Activated B cell treated with CpG ODN at 0.5 μM for 24 hours (primary cell): ENCODE measurements at regions of chr1 and their contacts with region 1.

Region 1: DNA sequence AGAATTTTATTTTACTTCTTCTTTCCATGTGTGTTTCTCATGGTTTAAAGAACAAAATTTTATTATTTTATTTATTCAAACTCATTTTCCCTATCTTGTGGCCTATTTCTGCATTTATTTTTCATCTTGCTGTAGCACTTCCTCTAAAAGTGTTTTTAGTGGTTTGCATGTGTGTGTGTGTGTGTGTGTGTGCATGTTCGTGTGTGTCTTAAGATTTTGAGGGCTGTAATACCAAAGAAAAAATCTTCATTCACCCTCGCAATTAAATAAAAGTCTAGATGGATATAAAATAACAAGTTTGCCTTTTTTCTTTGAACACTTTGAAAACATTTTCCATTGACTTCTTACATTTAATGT is 24.6 kb upstream of the FCRL3 start:
- DNase-seq: no peak
- ATAC-seq: peak; percentile 17
- H3K4me3 Mint-ChIP-seq: peak overlapping the region; percentile 16
- H3K27ac Mint-ChIP-seq: peak overlapping the region; percentile 97
- H3K4me1 Mint-ChIP-seq: peaks cover 71% of the 10 kb centered on the region
- H3K27me3 Mint-ChIP-seq: no peaks in the 10 kb centered on the region
- CTCF ChIP-seq: no peak

Region 2: GRCh38 chr1:157448636-157449035 is 276.6 kb before region 1 on chr1:
- CTCF ChIA-PET with region 1: no interaction called
- POLR2A ChIA-PET with region 1: no interaction called
- intact Hi-C with region 1: no loop called
- DNase-seq: no peak
- ATAC-seq: no peak
- H3K4me3 Mint-ChIP-seq: no peak overlapping the region
- H3K27ac Mint-ChIP-seq: no peak overlapping the region
- H3K4me1 Mint-ChIP-seq: no peaks in the 10 kb centered on the region
- H3K27me3 Mint-ChIP-seq: no peaks in the 10 kb centered on the region
- CTCF ChIP-seq: no peak

Region 3: GRCh38 chr1:157505481-157506272 is 219.5 kb before region 1 on chr1:
- CTCF ChIA-PET with region 1: no interaction called
- POLR2A ChIA-PET with region 1: no interaction called
- intact Hi-C with region 1: no loop called
- DNase-seq: peak; percentile 33
- ATAC-seq: peak; percentile 98
- H3K4me3 Mint-ChIP-seq: peak overlapping the region; percentile 69
- H3K27ac Mint-ChIP-seq: peak overlapping the region; percentile 50
- H3K4me1 Mint-ChIP-seq: peaks cover 37% of the 10 kb centered on the region
- H3K27me3 Mint-ChIP-seq: no peaks in the 10 kb centered on the region
- CTCF ChIP-seq: no peak

Region 4: DNA sequence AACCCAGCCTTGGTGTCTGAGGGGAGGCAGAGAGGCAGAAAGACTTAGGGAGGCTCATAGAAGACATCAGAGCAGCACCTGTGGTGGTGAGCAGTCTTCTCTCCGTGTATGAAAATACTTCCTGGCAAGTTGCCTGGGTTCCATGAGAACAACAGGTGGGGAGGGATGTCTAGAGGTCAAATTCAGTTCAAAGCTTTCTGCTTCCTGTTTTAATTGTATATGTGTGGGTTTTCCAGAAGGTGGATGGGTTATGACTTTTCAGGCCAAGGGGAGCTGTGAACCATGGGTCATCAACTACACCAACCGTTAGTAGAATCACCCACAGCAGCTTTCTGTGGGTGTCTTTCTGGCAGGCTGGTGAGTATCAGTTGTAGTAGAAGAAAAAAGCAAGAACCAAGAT is 55.8 kb after region 1 on chr1:
- CTCF ChIA-PET with region 1: no interaction called
- POLR2A ChIA-PET with region 1: interaction called, 11 read pairs
- intact Hi-C with region 1: no loop called
- DNase-seq: no peak
- ATAC-seq: peak; percentile 22
- H3K4me3 Mint-ChIP-seq: peak overlapping the region; percentile 48
- H3K27ac Mint-ChIP-seq: peak overlapping the region; percentile 77
- H3K4me1 Mint-ChIP-seq: peaks cover 99% of the 10 kb centered on the region
- H3K27me3 Mint-ChIP-seq: no peaks in the 10 kb centered on the region
- CTCF ChIP-seq: no peak